GM12878 (cell line): ENCODE measurements at regions of chr15 and their contacts with region 1.

Region 1: DNA sequence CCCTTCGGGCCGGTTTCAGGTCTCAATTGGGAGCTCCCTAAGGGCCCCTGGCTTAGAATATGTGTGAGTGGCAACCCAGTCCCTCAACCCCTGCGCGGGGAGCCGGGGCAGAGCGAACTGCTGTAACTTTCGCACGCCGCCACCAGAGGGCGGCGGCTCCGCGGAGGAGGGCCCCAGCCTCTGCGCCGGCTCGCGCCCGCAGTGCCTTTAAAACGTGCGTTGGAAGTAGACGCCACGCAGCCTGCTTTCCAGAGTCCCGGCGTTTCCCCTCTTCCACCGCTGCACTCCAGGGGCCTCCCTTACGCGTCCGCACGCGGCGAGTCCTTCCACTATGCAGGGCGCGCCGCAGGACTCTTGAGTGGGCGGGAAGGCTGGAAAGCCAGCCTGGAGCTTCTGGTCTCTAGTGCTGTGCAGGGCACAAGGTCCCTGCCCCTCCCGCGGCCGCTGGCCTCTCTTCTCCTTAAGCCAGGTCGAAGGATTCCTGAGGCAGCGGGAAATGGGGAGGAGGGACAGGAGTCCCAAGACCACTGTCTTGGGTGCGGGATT is 23.7 kb upstream of the RNU6-1 start:
- DNase-seq: peak; percentile 61
- ATAC-seq: peak; percentile 93
- H3K4me3 ChIP-seq: peak overlapping the region; percentile 64
- H3K27ac ChIP-seq: peak overlapping the region; percentile 86
- H3K4me1 ChIP-seq: peaks cover 34% of the 10 kb centered on the region
- H3K27me3 ChIP-seq: no peaks in the 10 kb centered on the region
- CTCF ChIP-seq: peak; percentile 89 to 95 (median 92); a peak in 5 of 6 replicates
- EP300 ChIP-seq: peak in 1 of 2 experiments; percentile 37; a peak in 1 of 4 replicates
- POLR2A ChIP-seq: no peak; the same call in 1 of the 2 replicates
- RAD21 ChIP-seq: peak; percentile 95

Region 2: GRCh38 chr15:67880651-67881182 is 17.2 kb after region 1 on chr15:
- CTCF ChIA-PET with region 1: interaction called, 10 read pairs
- POLR2A ChIA-PET with region 1: no interaction called
- RAD21 ChIA-PET with region 1: interaction called, 3 read pairs
- SMC1A ChIA-PET with region 1: interaction called, 5 read pairs
- in situ Hi-C with region 1: no loop called
- intact Hi-C with region 1: no loop called
- DNase-seq: no peak
- ATAC-seq: no peak; the same call in 2 of the 3 replicates
- H3K4me3 ChIP-seq: no peak overlapping the region
- H3K27ac ChIP-seq: no peak overlapping the region
- H3K4me1 ChIP-seq: peaks cover 9% of the 10 kb centered on the region
- H3K27me3 ChIP-seq: no peaks in the 10 kb centered on the region
- CTCF ChIP-seq: no peak
- EP300 ChIP-seq: no peak
- POLR2A ChIP-seq: no peak
- RAD21 ChIP-seq: no peak

Region 3: DNA sequence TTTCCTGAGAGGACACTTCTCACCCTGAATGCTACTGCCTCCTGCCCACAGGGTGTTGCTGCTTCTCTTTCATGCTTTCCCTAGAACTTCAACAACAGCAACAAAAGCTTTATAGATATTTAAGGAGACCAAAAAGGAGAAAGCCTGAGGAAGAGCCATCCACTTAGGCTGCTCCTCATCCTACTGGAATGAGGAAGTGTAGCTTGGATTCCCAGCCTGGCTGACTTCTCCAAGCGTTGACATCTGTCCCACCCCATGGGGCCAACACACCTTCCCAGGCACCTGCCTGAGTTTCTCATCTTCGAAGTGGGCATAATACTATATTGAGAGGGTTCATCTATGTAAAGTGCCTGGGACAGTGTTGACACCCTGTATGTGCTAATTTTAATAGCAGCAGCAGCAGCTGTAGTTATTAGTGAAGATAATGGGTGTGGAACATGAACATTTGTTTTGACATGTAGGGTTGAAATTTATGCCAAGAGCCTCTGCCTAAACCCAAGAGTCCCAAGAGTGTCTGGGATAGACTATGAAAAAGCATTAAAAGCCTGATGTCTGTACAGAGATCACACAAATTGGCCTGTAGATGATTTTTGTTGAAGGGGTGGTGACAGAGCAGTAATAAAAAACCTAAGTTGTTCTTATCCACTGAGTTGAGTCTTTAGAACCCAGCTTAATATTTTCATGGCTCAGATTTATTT is 94.1 kb after region 1 on chr15:
- CTCF ChIA-PET with region 1: no interaction called
- POLR2A ChIA-PET with region 1: interaction called, 3 read pairs
- RAD21 ChIA-PET with region 1: interaction called, 14 read pairs
- SMC1A ChIA-PET with region 1: no interaction called
- in situ Hi-C with region 1: no loop called
- intact Hi-C with region 1: loop called (anchors 5 kb)
- DNase-seq: no peak
- ATAC-seq: no peak
- H3K4me3 ChIP-seq: no peak overlapping the region
- H3K27ac ChIP-seq: no peak overlapping the region
- H3K4me1 ChIP-seq: peaks cover 37% of the 10 kb centered on the region
- H3K27me3 ChIP-seq: no peaks in the 10 kb centered on the region
- CTCF ChIP-seq: no peak
- EP300 ChIP-seq: no peak
- POLR2A ChIP-seq: no peak
- RAD21 ChIP-seq: no peak

Region 4: GRCh38 chr15:68080783-68081182 is 217.3 kb after region 1 on chr15:
- CTCF ChIA-PET with region 1: interaction called, 3 read pairs
- POLR2A ChIA-PET with region 1: no interaction called
- RAD21 ChIA-PET with region 1: interaction called, 5 read pairs
- SMC1A ChIA-PET with region 1: interaction called, 10 read pairs
- in situ Hi-C with region 1: no loop called
- intact Hi-C with region 1: no loop called
- DNase-seq: no peak
- ATAC-seq: peak; percentile 53
- H3K4me3 ChIP-seq: no peak overlapping the region
- H3K27ac ChIP-seq: no peak overlapping the region
- H3K4me1 ChIP-seq: peaks cover 15% of the 10 kb centered on the region
- H3K27me3 ChIP-seq: no peaks in the 10 kb centered on the region
- CTCF ChIP-seq: no peak
- EP300 ChIP-seq: no peak
- POLR2A ChIP-seq: no peak
- RAD21 ChIP-seq: no peak

Region 5: GRCh38 chr15:68163191-68163590 is 299.7 kb after region 1 on chr15:
- CTCF ChIA-PET with region 1: interaction called, 119 read pairs
- POLR2A ChIA-PET with region 1: no interaction called
- RAD21 ChIA-PET with region 1: interaction called, 12 read pairs
- SMC1A ChIA-PET with region 1: interaction called, 9 read pairs
- in situ Hi-C with region 1: no loop called
- intact Hi-C with region 1: no loop called
- DNase-seq: no peak
- ATAC-seq: no peak
- H3K4me3 ChIP-seq: no peak overlapping the region
- H3K27ac ChIP-seq: no peak overlapping the region
- H3K4me1 ChIP-seq: no peaks in the 10 kb centered on the region
- H3K27me3 ChIP-seq: no peaks in the 10 kb centered on the region
- CTCF ChIP-seq: no peak
- EP300 ChIP-seq: no peak
- POLR2A ChIP-seq: no peak
- RAD21 ChIP-seq: no peak